ENCODE measurements at regions of chr21 and their contacts with region 1.

Region 1: DNA sequence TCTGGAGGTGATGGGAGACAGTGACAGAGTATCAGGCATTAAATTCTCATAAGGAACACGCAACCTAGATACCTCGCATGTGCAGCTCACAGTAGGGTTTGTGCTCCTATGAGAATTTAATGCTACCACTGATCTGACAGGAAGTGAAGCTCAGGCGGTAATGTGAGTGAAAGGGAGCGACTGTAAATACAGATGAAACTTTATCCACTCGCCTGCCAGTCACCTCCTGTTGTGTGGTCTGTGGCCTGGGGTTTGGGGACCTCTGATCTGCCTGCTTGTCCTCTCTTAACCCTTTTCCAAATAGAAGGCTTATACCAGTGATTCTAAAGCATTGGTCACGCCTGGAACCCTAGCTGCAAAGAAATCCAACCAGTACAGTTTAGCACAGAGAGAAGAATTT is 15.3 kb downstream of the GABPA start:
- DNase-seq: no peak
- ATAC-seq: no peak
- H3K4me3 Mint-ChIP-seq: no peak overlapping the region
- H3K27ac Mint-ChIP-seq: no peak overlapping the region
- H3K4me1 Mint-ChIP-seq: no peaks in the 10 kb centered on the region
- H3K27me3 Mint-ChIP-seq: no peaks in the 10 kb centered on the region
- CTCF ChIP-seq: no peak

Region 2: GRCh38 chr21:25298512-25299491 is 451.3 kb before region 1 on chr21:
- CTCF ChIA-PET with region 1: no interaction called
- POLR2A ChIA-PET with region 1: no interaction called
- intact Hi-C with region 1: no loop called
- DNase-seq: no peak
- ATAC-seq: peak; percentile 58
- H3K4me3 Mint-ChIP-seq: peak overlapping the region; percentile 36
- H3K27ac Mint-ChIP-seq: peak overlapping the region; percentile 36
- H3K4me1 Mint-ChIP-seq: peaks cover 60% of the 10 kb centered on the region
- H3K27me3 Mint-ChIP-seq: no peaks in the 10 kb centered on the region
- CTCF ChIP-seq: no peak

Region 3: DNA sequence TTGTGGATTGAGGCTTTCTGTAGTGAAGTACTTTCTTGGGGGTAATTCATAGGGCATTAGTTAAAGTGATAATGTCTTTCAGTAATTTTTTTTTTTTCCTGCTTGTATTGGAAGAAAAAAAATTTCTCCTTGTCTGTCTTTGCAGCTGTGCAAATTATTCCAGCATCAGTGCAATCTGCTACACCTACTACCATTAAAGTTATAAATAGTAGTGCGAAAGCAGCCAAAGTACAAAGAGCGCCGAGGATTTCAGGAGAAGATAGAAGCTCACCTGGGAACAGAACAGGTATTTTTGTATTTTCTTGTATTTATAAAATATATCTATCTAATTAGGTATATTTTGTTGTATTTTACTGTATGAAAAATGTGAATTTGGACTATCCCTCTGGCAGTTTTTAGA is 14.0 kb after region 1 on chr21:
- CTCF ChIA-PET with region 1: no interaction called
- POLR2A ChIA-PET with region 1: no interaction called
- intact Hi-C with region 1: loop called (anchors 2 kb)
- DNase-seq: no peak
- ATAC-seq: no peak
- H3K4me3 Mint-ChIP-seq: no peak overlapping the region
- H3K27ac Mint-ChIP-seq: no peak overlapping the region
- H3K4me1 Mint-ChIP-seq: no peaks in the 10 kb centered on the region
- H3K27me3 Mint-ChIP-seq: no peaks in the 10 kb centered on the region
- CTCF ChIP-seq: no peak

Measured in activated B cell treated with CpG ODN at 0.5 μM for 24 hours (primary cell).